ENCODE measurements at regions of chr1 and their contacts with region 1.

Region 1: GRCh38 chr1:67749844-67750689 is 65.1 kb downstream of the GADD45A start:
- DNase-seq: peak in 6 of 7 donors; percentile 54 to 65 (median 57)
- H3K4me3 ChIP-seq: peak overlapping the region in 1 of 4 donors; percentile 4
- H3K27ac ChIP-seq: peak overlapping the region in 4 of 5 donors; percentile 44 to 79 (median 58)
- H3K4me1 ChIP-seq: peaks cover 24 to 34% of the 10 kb centered on the region in 2 donors
- H3K27me3 ChIP-seq: no peaks in the 10 kb centered on the region
- CTCF ChIP-seq: no peak
- POLR2A ChIP-seq: peak in 1 of 2 donors; percentile 8

Region 2: DNA sequence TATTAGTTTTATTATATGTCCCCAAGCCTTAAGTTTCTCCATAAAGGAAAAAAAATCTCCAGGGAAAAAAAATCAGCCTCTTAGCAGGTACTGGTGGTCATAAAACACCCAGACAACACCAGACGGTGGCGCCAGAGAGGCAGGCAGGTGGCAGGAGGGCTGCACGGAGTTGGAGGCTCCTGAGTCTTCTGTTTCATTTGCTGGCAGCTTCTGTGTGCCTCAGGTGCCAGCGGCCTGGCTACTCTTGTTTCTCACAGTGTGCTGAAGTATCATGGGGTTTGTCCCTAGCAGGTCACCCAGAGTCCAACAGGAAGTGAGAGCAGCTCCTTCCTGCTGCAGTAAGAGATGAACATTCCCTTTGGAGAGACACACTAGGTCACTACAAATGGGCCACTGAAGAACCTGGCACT is 188.4 kb before region 1 on chr1:
- intact Hi-C with region 1: loop called (anchors 5 to 10 kb)
- DNase-seq: peak; percentile 86 to 97 (median 94)
- H3K4me3 ChIP-seq: no peak overlapping the region
- H3K27ac ChIP-seq: no peak overlapping the region
- H3K4me1 ChIP-seq: peaks cover 3 to 18% of the 10 kb centered on the region in 2 donors
- H3K27me3 ChIP-seq: no peaks in the 10 kb centered on the region
- CTCF ChIP-seq: peak; percentile 73 to 92 (median 84)
- POLR2A ChIP-seq: no peak

Region 3: GRCh38 chr1:67880056-67880601 is 130.1 kb after region 1 on chr1:
- intact Hi-C with region 1: no loop called
- DNase-seq: peak; percentile 51 to 83 (median 76)
- H3K4me3 ChIP-seq: no peak overlapping the region
- H3K27ac ChIP-seq: peak overlapping the region in 2 of 5 donors; percentile 17 to 56
- H3K4me1 ChIP-seq: peaks cover 0 to 11% of the 10 kb centered on the region in 2 donors
- H3K27me3 ChIP-seq: no peaks in the 10 kb centered on the region
- CTCF ChIP-seq: no peak
- POLR2A ChIP-seq: no peak

Region 4: GRCh38 chr1:68157416-68157815 is 407.3 kb after region 1 on chr1:
- intact Hi-C with region 1: no loop called
- DNase-seq: no peak
- H3K4me3 ChIP-seq: no peak overlapping the region
- H3K27ac ChIP-seq: no peak overlapping the region
- H3K4me1 ChIP-seq: no peaks in the 10 kb centered on the region
- H3K27me3 ChIP-seq: no peaks in the 10 kb centered on the region
- CTCF ChIP-seq: no peak
- POLR2A ChIP-seq: no peak